ENCODE measurements at regions of chr12 and their contacts with region 1.

Region 1: GRCh38 chr12:3872800-3873636 is at the start of gene PARP11:
- DNase-seq: peak; percentile 100
- H3K4me3 Mint-ChIP-seq: peak within 1 kb of the TSS; percentile 92
- H3K27ac Mint-ChIP-seq: peak within 1 kb of the TSS; percentile 90
- H3K4me1 Mint-ChIP-seq: peaks cover 44% of the 10 kb centered on the region
- H3K27me3 Mint-ChIP-seq: no peaks in the 10 kb centered on the region
- total RNA-seq, gene PARP11: 11.4 and 14.8 TPM in 2 replicates

Region 2: DNA sequence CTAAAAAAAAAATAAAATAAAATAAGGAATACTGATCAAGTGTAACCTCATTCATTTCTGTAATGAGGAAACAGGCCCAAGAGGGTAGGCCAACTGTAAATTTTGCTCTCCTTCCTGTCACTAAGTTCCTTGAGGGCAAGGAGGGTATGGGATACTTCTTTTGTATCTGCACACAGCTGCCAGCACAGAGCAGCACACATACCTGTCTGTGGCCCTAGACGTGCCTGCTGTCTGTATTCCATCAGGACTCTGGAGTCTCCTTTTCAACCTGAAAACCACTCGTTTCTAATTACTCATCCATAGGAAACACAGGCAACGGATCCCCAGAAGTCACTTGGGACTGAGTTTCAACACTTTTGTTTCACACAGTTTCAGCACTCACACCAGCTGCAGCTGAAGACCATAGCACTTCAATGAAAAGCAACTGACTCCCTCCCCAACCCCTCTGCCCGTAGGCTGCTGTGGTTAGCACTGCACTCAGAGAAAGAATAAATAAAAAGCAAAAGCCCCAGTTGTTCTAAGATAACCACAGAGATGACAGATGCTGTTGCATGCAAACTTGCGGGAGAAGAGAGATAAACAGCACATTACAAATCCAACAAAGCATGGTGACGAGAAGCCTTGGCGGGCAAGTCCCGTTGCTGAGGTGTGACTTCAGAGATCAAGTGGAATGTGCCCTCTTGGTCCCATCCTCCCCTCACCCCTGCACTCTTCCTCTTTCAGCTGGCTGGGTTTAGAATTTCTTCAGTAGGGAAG is 145.0 kb before region 1 on chr12:
- intact Hi-C with region 1: loop called (anchors 5 kb)
- DNase-seq: peak; percentile 88
- H3K4me3 Mint-ChIP-seq: peak overlapping the region; percentile 82
- H3K27ac Mint-ChIP-seq: peak overlapping the region; percentile 93
- H3K4me1 Mint-ChIP-seq: peaks cover 35% of the 10 kb centered on the region
- H3K27me3 Mint-ChIP-seq: no peaks in the 10 kb centered on the region

Region 3: DNA sequence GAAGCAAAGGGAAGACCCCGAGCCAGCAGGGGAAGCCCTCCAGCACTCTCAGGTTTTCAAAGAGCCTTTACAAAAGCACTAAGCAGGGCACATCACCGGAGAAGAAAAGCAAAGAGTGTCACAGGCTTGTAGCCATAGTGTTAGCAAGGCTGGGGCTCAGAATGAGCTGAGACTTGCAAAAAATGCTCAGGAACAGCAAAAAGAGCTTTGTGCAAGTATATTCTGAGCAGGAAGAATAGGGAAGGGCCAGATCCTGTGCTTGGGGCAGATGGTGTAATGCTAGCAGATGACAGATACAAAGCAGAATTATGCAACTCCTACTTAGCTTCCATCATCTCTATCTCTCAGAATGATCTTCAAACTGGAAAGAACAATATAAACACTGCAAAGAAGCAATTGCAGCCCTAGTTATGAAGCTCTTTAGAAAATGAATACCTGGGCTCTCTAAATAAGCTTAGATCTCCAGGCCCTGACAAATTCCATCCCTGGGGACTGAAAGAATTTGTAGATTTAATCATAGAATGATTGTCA is 23.8 kb after region 1 on chr12:
- intact Hi-C with region 1: loop called (anchors 2 kb)
- DNase-seq: peak; percentile 64
- H3K4me3 Mint-ChIP-seq: peak overlapping the region; percentile 68
- H3K27ac Mint-ChIP-seq: peak overlapping the region; percentile 90
- H3K4me1 Mint-ChIP-seq: peaks cover 24% of the 10 kb centered on the region
- H3K27me3 Mint-ChIP-seq: no peaks in the 10 kb centered on the region

Region 4: DNA sequence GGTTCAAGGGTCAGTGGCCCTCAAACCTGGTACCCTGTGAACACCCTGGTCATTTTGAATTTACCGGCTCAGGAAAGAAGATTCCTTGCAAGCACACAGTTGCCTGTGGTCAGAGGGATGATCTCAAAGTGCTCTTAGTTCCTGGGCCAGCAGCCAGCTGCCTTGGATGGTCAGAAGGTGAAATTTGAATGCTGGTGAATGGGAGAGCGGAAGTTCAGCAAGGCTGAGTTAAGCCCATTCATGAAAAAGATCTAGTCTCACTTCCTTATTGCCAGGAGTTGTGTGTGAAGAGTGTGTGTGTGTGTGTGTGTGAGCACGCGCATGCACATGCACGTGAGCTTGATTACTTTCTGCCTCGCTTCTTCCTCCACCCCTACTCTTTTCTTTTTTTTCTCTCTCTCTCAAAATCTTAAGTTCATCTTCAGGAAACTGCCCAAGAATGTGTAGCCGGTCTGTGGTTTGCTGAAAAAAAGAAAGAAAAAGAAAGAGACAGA is 245.0 kb after region 1 on chr12:
- intact Hi-C with region 1: loop called (anchors 5 kb)
- DNase-seq: no peak
- H3K4me3 Mint-ChIP-seq: peak overlapping the region; percentile 73
- H3K27ac Mint-ChIP-seq: peak overlapping the region; percentile 89
- H3K4me1 Mint-ChIP-seq: peaks cover 60% of the 10 kb centered on the region
- H3K27me3 Mint-ChIP-seq: no peaks in the 10 kb centered on the region

Region 5: DNA sequence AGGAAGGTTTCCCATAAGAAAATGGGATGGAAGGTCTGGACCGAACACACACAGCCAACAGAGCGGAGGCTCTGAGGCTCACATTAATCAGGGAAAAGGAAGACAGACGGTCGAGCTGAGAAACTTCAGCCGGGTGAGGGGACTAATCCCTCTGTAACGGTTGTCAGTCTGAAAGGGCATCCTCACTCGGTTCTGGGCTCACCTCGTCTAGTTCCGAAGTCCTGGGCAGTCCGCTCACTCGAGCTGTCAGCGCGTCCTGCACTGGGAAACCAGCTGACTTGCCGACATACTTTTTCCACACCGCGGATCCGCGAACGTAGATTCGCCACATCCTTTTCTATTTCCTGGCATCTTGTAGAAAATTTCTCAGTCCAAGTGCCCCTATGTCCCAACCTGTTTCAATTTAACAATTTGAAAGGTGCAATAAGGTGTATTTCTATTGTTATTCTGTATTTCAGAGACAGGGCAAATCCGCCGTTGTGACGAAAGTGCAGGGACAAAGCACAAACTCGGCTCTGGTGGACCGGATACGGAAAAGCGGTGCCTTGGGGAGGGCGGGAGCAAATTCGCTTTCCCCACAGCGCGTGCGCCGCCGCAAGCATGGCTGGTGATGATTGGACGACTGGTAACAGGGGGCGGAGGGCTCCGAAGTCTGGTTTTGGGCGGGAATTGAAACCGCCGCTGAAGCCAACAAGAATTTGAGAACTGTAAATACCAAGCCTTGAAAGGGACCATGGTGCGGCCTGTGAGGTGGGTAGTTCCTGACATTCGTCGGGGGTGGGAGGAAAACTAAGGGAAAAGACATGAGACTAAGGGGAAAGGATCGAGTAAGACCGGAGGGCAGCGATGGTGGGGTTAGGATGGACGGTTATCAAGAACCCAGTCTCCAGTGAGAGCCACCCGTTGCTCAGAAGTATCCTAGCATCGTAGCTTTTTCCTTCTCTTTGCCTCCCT is 665.5 kb after region 1 on chr12 and contains the start of gene RAD51AP1:
- intact Hi-C with region 1: loop called (anchors 5 kb)
- DNase-seq: peak; percentile 98
- H3K4me3 Mint-ChIP-seq: peak within 1 kb of the TSS; percentile 96
- H3K27ac Mint-ChIP-seq: peak within 1 kb of the TSS; percentile 93
- H3K4me1 Mint-ChIP-seq: peaks cover 29% of the 10 kb centered on the region
- H3K27me3 Mint-ChIP-seq: no peaks in the 10 kb centered on the region
- total RNA-seq, gene RAD51AP1: 31.4 and 35.8 TPM in 2 replicates

Region 6: GRCh38 chr12:4591180-4591687 is 718.2 kb after region 1 on chr12:
- intact Hi-C with region 1: no loop called
- DNase-seq: no peak
- H3K4me3 Mint-ChIP-seq: no peak overlapping the region
- H3K27ac Mint-ChIP-seq: no peak overlapping the region
- H3K4me1 Mint-ChIP-seq: no peaks in the 10 kb centered on the region
- H3K27me3 Mint-ChIP-seq: peaks cover 2% of the 10 kb centered on the region